ENCODE measurements at regions of chr17 and their contacts with region 1.

Region 1: DNA sequence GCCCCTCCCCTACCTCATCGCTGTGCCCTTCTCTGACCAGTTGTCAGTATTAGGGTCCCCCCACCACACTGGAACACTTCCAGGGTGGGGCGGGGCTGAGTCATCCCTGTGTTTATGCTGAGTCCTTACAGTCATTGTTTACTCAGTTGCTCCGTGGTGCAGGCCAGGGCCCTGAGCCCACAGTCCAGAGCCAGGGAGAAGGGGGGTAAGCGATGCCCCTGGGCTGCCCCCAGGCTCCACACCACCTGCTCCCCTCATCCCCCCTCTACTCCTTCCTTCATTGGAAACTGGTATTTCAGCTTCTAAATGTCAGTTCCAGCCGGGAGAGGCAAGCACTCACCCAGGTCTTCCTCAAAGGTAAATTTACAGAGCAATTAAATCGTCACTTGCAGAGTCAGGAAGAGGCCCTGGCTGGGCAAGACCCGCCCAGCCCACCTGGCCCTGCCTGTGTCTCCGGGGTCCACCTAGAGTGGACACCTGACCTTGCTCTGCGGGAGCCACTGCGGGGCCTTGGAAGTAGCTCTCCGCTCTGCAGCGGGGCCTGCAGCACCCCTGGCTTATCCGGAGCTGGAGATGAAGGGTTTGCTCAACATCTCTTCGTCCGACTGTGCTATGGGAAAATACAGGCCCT is 4.8 kb downstream of the ATP2A3 start:
- DNase-seq: no peak

Region 2: GRCh38 chr17:3907483-3908216 is 51.8 kb before region 1 on chr17:
- in situ Hi-C with region 1: loop called (anchors 5 kb)
- DNase-seq: no peak

Region 3: DNA sequence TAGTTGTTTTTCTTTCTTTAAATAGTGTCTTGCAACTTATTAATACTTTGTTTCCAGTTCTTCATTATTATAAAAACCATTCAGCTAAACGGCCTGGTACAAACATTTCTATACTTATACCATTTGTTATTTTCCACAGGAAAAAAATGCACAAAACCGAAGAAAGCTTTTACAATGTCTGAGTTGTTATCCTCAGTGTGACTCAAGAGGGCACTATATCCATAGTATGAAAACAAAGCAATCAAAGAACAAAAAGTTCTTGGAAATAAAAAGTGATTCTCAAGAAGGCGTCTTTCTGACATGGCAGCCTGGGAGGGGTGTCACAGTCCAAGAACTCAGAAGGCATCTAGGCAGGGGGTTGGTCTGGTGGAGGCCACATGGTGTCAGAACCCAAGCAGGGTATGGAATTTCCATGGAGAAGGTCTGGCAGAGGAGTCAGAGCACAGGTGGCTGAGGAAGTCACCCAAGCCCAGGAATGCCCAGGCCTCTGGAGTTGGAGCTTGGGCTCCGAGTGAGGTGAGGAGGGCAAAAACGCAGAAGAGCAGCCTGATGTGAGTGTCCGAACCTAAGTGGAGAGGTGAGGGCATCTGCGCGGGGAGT is 75.8 kb after region 1 on chr17:
- in situ Hi-C with region 1: no loop called
- DNase-seq: no peak

Region 4: DNA sequence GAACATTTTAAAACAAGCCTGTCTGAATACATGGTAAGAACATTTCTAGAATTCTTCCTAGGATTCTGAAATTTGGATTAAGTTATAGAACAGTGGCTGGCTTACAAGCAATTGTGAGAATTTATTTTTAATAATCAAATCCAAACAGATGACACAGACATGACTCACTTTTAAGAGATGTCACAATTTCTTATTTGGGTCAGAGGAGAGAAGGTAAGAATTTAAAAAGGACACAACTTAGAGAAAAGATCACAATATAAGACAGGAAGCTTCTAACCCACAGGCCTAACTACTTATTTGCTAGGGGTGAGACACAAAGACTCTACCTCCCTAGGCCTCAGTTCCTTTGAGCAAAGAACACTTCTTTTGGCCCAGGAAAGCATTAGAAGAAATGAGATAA is 150.7 kb after region 1 on chr17:
- in situ Hi-C with region 1: no loop called
- DNase-seq: no peak

Measured in G401 (cell line).